HCT116 (cell line): ENCODE measurements at regions of chr3 and their contacts with region 1.

Region 1: GRCh38 chr3:185659942-185660921 is 74.1 kb downstream of the SENP2 start:
- DNase-seq: peak; percentile 60
- ATAC-seq: peak; percentile 85
- H3K4me3 ChIP-seq: no peak overlapping the region
- H3K27ac ChIP-seq: no peak overlapping the region
- H3K4me1 ChIP-seq: peaks cover 2 to 24% of the 10 kb centered on the region in 2 experiments; a peak in 3 of 4 replicates
- H3K27me3 ChIP-seq: no peaks in the 10 kb centered on the region
- CTCF ChIP-seq: peak; percentile 81 to 100 (median 98)
- POLR2A ChIP-seq: no peak
- RAD21 ChIP-seq: peak; percentile 93

Region 2: DNA sequence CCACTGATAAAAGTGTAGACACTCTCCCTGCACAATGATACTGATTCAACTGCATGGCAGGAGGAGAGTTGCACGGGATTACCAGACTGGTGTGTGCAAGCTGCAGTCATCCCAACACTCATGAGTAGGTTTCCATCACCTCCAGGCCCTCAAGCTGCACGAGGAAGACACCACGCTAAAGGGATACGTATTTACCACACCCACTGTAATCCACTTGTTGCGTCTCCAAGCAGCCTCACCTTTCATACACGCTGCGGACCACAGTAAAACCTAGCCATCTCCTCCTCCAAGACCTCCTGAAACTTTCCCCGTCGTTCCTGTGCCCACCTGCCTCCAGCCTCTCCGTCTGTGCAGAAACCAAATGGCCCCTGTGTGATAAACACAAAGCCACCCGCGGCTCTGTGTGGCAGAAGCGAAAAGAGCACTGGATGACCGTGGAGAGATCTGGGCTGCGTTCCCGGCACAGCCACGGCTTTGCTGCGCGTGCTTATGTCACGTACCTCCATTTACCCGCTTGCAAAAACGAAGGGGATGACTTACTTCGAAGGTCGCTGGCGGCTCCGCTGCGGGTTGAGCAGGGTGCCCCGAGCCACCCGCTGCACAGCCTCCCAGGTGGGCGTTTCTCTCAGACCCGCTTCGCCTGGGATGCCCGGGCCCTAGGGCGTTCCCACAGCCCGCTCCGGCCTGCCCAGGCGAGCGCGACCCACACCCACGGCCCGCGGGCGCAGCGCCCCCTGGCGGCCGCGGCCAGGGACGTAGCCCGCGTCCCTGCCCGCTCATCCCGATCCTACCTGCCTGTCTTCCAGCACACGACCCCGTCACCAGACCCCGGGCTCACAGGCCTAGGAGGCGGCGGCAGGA is 1643.2 kb before region 1 on chr3:
- CTCF ChIA-PET with region 1: no interaction called
- POLR2A ChIA-PET with region 1: no interaction called
- RAD21 ChIA-PET with region 1: no interaction called
- intact Hi-C with region 1: no loop called
- DNase-seq: peak; percentile 21
- ATAC-seq: peak; percentile 88
- H3K4me3 ChIP-seq: peak overlapping the region; percentile 83 to 100
- H3K27ac ChIP-seq: peak overlapping the region; percentile 71
- H3K4me1 ChIP-seq: peaks cover 4 to 13% of the 10 kb centered on the region in 2 experiments; a peak in 3 of 4 replicates
- H3K27me3 ChIP-seq: no peaks in the 10 kb centered on the region
- CTCF ChIP-seq: peak; percentile 55 to 93 (median 72)
- POLR2A ChIP-seq: no peak
- RAD21 ChIP-seq: peak; percentile 79

Region 3: DNA sequence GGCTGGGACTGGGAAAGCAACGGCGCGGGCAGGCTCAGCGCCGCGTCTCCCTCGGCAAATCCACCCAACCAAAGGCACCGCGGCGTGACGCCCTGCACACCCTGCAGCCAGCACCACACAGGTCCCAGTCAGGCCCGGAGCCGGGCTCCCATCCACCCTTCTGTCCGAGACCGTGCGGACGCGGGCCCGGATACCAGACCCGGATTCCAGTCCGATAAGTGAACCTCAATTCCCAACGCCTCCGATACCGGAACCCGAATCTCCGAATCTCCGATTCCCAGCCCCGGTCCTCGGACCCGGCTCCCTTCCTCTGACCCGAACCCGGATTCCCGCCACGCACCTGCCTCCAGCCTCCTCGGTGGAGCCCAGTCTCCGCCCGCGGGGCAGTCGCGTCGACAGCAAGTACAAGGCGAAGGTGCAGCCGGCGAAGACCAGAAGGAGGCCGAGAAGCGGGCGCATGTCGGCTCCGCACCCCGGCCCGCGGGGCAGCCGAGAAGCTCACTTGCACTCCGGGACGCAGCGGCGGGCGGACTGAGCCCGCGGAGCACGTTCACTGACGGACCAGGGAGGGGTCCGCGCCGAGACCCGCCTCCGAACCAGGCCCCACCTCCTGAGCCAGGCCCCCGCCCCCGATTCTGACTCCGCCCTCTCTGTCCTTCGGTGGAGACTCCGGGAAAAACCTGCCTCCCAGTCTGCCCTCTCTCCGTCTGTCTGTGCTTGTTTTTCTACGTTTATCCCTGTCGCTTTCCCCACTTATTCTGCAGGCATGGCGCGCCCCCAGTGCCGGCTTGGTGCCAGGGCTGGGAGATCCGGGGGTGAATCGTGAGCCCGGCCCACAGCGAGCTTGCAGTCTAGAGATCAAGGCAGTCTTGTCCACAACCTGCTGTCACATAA is 161.5 kb before region 1 on chr3 and contains the start of gene TMEM41A:
- CTCF ChIA-PET with region 1: no interaction called
- POLR2A ChIA-PET with region 1: no interaction called
- RAD21 ChIA-PET with region 1: no interaction called
- intact Hi-C with region 1: no loop called
- DNase-seq: peak; percentile 73
- ATAC-seq: peak; percentile 97
- H3K4me3 ChIP-seq: peak within 1 kb of the TSS; percentile 92 to 95
- H3K27ac ChIP-seq: peak within 1 kb of the TSS; percentile 79
- H3K4me1 ChIP-seq: peaks cover 17 to 28% of the 10 kb centered on the region in 2 experiments
- H3K27me3 ChIP-seq: no peaks in the 10 kb centered on the region
- CTCF ChIP-seq: no peak
- POLR2A ChIP-seq: peak; percentile 67
- RAD21 ChIP-seq: peak; percentile 45; the same call in 1 of the 2 replicates
- total RNA-seq, gene TMEM41A: 25.4 TPM

Region 4: DNA sequence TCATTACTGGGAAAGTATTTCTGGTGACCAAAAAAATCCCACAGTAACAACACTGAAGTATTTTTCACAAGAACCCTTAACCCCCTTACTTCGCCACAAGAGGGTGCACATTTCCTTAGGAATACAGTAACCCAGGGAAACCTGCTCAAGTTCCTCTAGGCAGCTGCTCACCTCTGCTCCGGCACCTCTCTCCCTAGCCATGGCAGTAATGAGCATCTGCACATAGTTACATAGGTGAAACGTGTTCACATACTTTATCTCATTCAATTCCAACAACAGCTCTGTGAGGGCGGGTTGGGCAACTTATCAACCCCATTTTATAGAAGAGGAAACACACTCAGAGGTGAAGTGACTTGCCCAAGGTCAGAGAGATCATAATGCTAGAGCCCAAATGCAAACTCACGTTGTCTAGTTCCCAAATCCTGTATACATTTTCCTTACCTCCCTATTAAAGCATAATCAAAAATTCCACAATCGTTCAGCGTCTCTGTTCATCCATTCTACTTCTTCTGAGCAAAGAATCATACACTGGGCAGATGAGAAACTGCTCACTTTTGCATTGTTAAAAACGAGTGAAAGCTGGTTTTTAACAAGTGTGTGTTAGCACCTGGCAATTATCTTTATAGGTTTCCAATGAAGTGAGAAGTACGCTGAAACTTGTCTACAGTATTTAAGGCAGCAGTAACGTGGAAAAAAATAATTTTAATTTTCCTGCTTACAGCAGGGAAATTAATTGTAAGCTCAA is 73.9 kb after region 1 on chr3:
- CTCF ChIA-PET with region 1: interaction called, 10 read pairs
- POLR2A ChIA-PET with region 1: no interaction called
- RAD21 ChIA-PET with region 1: no interaction called
- intact Hi-C with region 1: no loop called
- DNase-seq: peak; percentile 83
- ATAC-seq: peak; percentile 96
- H3K4me3 ChIP-seq: no peak overlapping the region
- H3K27ac ChIP-seq: no peak overlapping the region
- H3K4me1 ChIP-seq: peaks cover 19 to 70% of the 10 kb centered on the region in 2 experiments
- H3K27me3 ChIP-seq: no peaks in the 10 kb centered on the region
- CTCF ChIP-seq: peak; percentile 70 to 78 (median 72)
- POLR2A ChIP-seq: no peak
- RAD21 ChIP-seq: peak; percentile 89

Region 5: DNA sequence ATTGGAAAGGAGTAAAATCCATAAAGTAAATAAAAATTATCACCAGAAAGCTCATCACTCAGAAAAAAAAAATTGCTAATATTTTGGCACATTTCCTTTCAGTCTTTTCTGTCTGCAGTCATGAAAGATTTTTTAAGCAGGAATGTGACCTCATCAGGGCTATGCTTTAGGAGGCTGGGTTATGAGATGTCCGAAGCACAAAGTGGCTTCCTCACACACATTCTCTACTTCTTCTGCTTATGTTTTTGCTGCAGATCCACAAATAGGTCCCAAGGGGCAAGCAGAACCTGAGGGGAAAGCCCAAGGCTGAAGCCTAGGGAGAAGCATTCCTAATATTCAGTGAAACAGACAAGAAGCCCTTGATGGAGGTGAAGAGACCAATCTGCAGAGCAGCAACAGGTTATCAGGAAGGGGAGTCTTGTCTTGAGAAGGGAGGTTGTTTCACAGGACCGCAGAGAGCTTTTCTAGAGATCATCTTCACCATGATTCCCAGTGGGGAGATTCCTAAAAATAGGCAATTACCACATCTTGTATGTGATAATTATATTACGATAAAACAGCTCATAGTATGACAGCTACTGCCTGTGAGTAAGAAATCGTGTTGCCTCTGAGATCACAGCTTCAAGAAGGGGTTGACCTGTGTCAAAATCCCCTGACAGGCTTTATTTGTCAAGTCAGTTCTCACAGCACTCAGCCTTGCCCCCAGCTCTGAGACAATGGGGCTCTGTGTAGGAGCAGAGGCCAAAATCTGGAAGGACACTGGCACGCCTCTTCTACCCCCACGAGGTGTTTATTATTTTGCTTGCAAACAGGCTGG is 104.1 kb after region 1 on chr3:
- CTCF ChIA-PET with region 1: interaction called, 24 read pairs
- POLR2A ChIA-PET with region 1: no interaction called
- RAD21 ChIA-PET with region 1: interaction called, 4 to 5 read pairs
- intact Hi-C with region 1: no loop called
- DNase-seq: no peak
- ATAC-seq: no peak
- H3K4me3 ChIP-seq: no peak overlapping the region
- H3K27ac ChIP-seq: no peak overlapping the region
- H3K4me1 ChIP-seq: peaks cover 3 to 42% of the 10 kb centered on the region in 2 experiments; a peak in 3 of 4 replicates
- H3K27me3 ChIP-seq: no peaks in the 10 kb centered on the region
- CTCF ChIP-seq: no peak
- POLR2A ChIP-seq: no peak
- RAD21 ChIP-seq: no peak

Region 6: DNA sequence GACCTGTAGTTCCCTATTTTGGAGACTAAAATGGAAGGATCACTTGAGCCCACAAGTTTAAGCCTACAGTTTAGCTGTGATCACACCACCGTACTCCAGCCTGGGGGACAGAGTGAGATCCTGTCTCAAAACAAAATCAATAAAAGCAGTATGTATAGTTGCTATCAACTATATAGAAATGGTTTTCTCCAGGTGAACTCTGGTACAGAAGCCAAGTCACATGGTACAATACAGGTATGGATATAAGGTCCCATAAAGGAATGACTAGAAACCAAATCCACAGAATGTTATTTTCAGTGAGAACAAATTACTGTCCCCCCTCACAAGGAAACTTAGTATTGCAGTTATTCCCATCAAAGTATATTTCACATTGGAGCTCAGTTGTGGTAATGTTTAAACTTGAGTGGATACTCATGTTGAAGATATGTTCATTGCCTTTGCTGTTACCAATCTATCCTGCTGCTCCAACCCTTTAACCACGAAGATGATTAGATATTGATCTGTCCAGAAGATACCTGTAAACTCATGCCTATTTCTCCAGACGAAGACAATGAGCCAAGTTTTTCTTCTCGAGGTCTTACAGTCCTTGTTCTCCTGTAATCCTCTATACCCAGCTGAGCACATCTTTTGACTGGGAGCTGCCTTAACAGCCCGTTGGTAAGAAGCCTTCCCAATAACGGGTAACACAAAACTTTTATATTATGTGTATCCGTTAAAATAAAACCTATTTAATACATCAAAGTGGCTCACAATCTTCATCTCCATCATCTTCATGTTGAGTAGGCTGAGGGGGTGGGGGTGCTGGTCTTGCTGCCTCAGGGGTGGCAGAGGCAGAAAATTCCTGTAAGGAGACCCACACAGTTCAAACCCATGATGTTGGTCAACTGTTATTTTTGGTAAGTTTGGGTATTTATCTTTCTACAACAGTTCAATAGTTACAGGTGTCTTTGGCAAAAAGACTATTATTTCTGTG is 253.0 kb after region 1 on chr3:
- CTCF ChIA-PET with region 1: interaction called, 15 read pairs
- POLR2A ChIA-PET with region 1: no interaction called
- RAD21 ChIA-PET with region 1: no interaction called
- intact Hi-C with region 1: no loop called
- DNase-seq: no peak
- ATAC-seq: peak; percentile 8; the same call in 1 of the 2 replicates
- H3K4me3 ChIP-seq: no peak overlapping the region
- H3K27ac ChIP-seq: no peak overlapping the region
- H3K4me1 ChIP-seq: peaks cover 0 to 3% of the 10 kb centered on the region in 2 experiments; a peak in 1 of 4 replicates
- H3K27me3 ChIP-seq: no peaks in the 10 kb centered on the region
- CTCF ChIP-seq: no peak
- POLR2A ChIP-seq: no peak
- RAD21 ChIP-seq: no peak

Region 7: DNA sequence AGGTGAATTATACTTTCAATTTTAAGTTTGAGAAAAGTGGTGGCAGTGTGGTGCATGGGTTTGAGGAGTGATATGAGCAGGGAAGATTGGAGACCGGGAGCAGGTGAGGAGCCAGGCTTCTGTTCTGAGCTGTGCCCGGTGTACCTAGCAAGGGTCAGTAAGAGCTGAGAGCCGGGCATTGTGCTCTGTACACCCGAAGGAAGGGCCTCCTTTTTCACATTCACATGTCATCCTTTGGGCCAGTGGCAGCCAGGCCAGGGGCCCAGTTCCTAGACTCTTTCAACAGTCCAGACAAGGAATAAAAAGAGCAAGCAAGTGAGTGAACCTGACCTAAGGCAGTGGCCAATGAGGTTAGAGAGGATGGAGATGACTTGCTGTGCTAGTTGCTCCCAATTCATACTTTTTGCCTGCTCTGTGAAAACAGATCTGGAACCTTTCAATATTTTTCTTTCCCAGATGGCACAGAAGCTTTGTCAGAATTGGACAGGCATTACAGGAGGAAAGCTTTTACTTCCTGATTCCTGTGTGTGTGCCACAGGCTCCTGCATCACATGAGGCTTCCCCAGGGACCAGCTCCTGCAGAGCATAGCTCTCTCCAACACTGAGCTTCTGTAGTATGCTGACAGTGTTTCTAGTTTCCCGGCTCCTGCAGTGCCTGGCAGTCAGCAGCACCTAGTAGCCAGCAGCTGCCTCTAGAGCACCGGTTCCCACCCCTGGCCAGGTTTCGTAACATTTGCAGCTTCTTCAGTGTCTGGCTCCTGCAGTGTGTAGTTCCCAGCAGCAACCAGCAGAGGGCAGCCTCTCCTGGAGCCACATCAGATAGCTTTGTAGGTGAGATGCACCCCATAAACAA is 282.9 kb after region 1 on chr3:
- CTCF ChIA-PET with region 1: interaction called, 18 read pairs
- POLR2A ChIA-PET with region 1: no interaction called
- RAD21 ChIA-PET with region 1: interaction called in 1 of 2 experiments, 5 read pairs
- intact Hi-C with region 1: no loop called
- DNase-seq: peak; percentile 72
- ATAC-seq: peak; percentile 91
- H3K4me3 ChIP-seq: no peak overlapping the region
- H3K27ac ChIP-seq: no peak overlapping the region
- H3K4me1 ChIP-seq: peaks cover 0 to 22% of the 10 kb centered on the region in 2 experiments; a peak in 3 of 4 replicates
- H3K27me3 ChIP-seq: no peaks in the 10 kb centered on the region
- CTCF ChIP-seq: peak; percentile 72 to 99 (median 99); a peak in 5 of 6 replicates
- POLR2A ChIP-seq: no peak
- RAD21 ChIP-seq: peak; percentile 68

Region 8: GRCh38 chr3:185976977-185977678 is 316.9 kb after region 1 on chr3:
- CTCF ChIA-PET with region 1: interaction called, 3 read pairs
- POLR2A ChIA-PET with region 1: no interaction called
- RAD21 ChIA-PET with region 1: no interaction called
- intact Hi-C with region 1: loop called (anchors 5 kb)
- DNase-seq: peak; percentile 57
- ATAC-seq: peak; percentile 100
- H3K4me3 ChIP-seq: no peak overlapping the region
- H3K27ac ChIP-seq: no peak overlapping the region
- H3K4me1 ChIP-seq: peaks cover 0 to 8% of the 10 kb centered on the region in 2 experiments; a peak in 1 of 4 replicates
- H3K27me3 ChIP-seq: no peaks in the 10 kb centered on the region
- CTCF ChIP-seq: peak; percentile 80 to 97 (median 95)
- POLR2A ChIP-seq: no peak
- RAD21 ChIP-seq: peak; percentile 84

Region 9: DNA sequence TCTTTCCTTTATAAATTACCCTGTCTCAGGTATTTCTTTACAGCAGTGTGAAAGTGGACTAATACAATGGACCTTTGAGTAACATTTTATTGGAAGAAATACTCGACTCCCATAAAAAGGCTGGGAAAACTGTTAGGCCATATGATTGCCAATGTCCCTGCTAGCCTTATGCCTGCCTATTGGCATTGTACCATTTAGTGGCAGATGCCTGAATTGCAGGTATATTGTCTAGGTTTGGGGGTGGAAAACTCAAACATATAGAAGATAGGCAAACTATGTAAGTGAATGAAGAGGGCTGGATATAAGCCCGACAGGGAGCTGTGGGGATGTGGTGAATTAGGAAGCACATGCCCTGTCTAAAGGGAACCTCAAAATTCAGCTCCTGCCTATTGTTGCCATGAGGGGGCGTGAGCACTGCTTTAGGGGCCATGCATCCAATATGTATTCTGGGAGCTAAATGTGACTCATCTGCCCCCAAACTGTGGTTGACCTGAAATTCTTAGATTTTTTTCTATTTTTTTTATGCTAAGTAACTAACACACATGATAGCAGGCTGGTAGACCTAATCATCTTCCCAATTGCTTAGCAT is 342.7 kb after region 1 on chr3:
- CTCF ChIA-PET with region 1: no interaction called
- POLR2A ChIA-PET with region 1: no interaction called
- RAD21 ChIA-PET with region 1: no interaction called
- intact Hi-C with region 1: no loop called
- DNase-seq: peak; percentile 31
- ATAC-seq: peak; percentile 95
- H3K4me3 ChIP-seq: no peak overlapping the region
- H3K27ac ChIP-seq: no peak overlapping the region
- H3K4me1 ChIP-seq: no peaks in the 10 kb centered on the region
- H3K27me3 ChIP-seq: no peaks in the 10 kb centered on the region
- CTCF ChIP-seq: peak; percentile 39 to 63 (median 44); a peak in 4 of 6 replicates
- POLR2A ChIP-seq: no peak
- RAD21 ChIP-seq: peak; percentile 68

Region 10: DNA sequence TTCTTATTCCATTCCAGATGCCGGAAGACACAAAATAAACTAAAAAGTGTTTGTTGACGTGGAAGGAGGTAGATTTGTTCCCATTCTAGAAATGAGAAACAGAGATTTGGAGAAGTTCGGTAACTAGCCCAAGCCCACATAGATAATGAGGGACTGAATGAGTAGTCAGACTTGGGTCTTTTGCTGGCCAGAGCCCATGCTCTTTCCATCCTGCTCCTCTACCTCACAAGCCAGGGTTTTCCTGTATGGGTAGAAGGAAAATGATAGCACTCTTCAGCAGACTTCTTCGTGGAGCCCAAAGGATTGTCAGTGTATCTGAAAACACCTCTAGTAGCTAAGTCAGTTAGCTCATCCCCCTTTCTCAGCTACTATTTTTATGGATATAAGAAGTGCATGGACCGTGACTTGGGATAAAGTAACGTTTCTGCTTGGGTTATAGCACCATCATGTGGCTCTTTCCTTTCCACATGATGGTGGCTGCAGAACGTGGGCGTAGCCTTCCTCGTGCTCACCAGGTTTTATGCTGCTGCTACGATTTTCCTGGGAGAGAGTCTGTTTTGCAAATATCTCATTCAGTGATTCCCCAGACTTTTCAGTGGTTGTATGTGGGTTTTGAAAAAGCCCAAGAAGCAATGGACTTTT is 617.2 kb after region 1 on chr3:
- CTCF ChIA-PET with region 1: interaction called, 3 read pairs
- POLR2A ChIA-PET with region 1: no interaction called
- RAD21 ChIA-PET with region 1: no interaction called
- intact Hi-C with region 1: loop called (anchors 5 kb)
- DNase-seq: peak; percentile 40
- ATAC-seq: peak; percentile 99
- H3K4me3 ChIP-seq: no peak overlapping the region
- H3K27ac ChIP-seq: no peak overlapping the region
- H3K4me1 ChIP-seq: peaks cover 0 to 5% of the 10 kb centered on the region in 2 experiments; a peak in 1 of 4 replicates
- H3K27me3 ChIP-seq: no peaks in the 10 kb centered on the region
- CTCF ChIP-seq: peak; percentile 49 to 80 (median 68)
- POLR2A ChIP-seq: no peak
- RAD21 ChIP-seq: peak; percentile 93